SK-N-SH (cell line): ENCODE measurements at regions of chr10 and their contacts with region 1.

Region 1: GRCh38 chr10:128660726-128661125 is 534.5 kb upstream of the MKI67 start:
- DNase-seq: no peak
- H3K4me3 ChIP-seq: no peak overlapping the region
- H3K27ac ChIP-seq: no peak overlapping the region
- H3K4me1 ChIP-seq: no peaks in the 10 kb centered on the region
- H3K27me3 ChIP-seq: no peaks in the 10 kb centered on the region
- CTCF ChIP-seq: no peak
- EP300 ChIP-seq: no peak
- RAD21 ChIP-seq: no peak

Region 2: GRCh38 chr10:128631801-128632241 is 28.9 kb before region 1 on chr10:
- CTCF ChIA-PET with region 1: interaction called, 10 read pairs
- POLR2A ChIA-PET with region 1: no interaction called
- DNase-seq: peak; percentile 36
- H3K4me3 ChIP-seq: peak overlapping the region in 1 of 2 experiments; percentile 29; a peak in 1 of 4 replicates
- H3K27ac ChIP-seq: no peak overlapping the region
- H3K4me1 ChIP-seq: peaks cover 0 to 6% of the 10 kb centered on the region in 2 experiments; a peak in 1 of 4 replicates
- H3K27me3 ChIP-seq: no peaks in the 10 kb centered on the region
- CTCF ChIP-seq: peak; percentile 37
- EP300 ChIP-seq: no peak
- RAD21 ChIP-seq: peak; percentile 53

Region 3: DNA sequence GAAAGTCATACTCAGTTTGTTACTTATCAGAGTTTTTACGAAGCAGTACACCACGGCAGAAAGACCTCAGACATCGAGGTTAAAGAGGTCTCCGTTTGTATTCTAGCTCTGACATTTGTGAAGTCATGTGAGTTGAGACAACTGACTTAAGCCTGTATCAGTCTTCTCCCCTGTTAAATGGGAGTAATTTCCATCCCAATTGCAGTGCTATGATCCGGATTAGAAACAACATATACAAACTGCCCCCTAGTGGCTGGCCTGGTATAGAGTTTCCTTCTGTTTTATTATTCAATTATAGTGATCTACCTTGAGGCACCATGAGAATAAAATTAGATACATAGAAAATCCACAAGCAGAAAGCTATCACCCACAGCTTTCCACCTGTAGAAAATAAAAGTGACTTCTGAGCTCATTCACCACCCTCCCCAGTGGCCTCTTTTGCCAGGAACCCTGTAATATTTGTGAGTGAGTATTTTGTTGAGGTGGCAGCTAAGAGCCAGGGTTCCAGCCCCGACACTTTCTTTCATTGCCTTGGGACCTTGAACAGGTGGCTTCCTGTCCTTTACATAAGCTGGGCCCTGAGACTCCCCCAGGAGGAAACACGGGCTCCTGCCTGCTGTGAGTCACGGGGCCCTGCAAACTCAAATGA is 199.1 kb after region 1 on chr10:
- CTCF ChIA-PET with region 1: no interaction called
- POLR2A ChIA-PET with region 1: no interaction called
- DNase-seq: peak; percentile 38
- H3K4me3 ChIP-seq: peak overlapping the region in 1 of 2 experiments; percentile 27; a peak in 1 of 4 replicates
- H3K27ac ChIP-seq: no peak overlapping the region
- H3K4me1 ChIP-seq: no peaks in the 10 kb centered on the region
- H3K27me3 ChIP-seq: no peaks in the 10 kb centered on the region
- CTCF ChIP-seq: peak; percentile 39
- EP300 ChIP-seq: no peak
- RAD21 ChIP-seq: peak; percentile 37